Activated T-helper 1 cell treated with anti-CD3 and anti-CD28 coated beads, Interleukin-12 subunit alpha, Interleukin-12 subunit beta, Interleukin-2, Interleukin-4 antibody, amounts not matched to agents 30 ng/mL and 10 ng/mL and 1 ng/mL, durations not matched to agents 14 hours and 24 hours and 36 hours (primary cell): ENCODE measurements at regions of chr9 and their contacts with region 1.

Region 1: DNA sequence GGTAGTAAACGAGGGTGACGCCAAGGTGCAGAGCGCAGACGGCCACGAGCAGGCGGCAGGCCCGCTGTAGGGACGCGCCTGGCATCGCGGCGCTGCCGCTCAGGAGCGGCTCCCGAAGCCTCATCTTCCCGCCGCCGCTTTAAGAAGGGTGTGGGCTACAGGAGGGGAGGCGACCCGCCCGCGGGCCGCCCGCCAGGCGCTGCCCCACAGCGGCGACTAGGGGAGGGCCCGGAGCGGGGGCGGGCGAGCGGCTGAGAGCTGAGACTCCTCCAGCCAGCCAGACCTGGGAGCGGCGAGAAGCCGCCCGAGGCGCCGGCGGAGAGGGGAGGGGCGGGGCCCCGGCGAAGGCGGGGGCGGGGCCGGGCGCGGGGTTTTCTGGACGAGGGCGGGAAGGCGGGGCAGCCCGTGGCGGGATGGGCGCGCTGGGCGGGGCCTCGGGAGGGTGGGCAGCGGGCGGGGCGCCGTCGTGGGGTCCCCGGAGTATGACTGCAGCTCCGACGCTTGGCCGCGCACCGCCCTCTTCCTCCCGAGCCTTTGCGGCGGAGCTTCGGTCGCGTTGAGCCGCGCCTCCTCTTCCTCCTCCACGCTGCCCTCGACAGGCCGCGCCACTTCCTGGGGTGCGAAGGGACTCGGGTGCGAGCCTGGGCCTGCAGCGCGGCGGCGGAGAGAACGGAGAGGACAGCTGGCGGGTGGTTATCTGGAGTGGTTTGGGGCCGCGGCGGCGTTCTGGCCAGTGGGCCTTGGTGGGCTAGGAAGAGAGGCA is at the start of gene B4GALT1:
- DNase-seq: peak; percentile 91
- H3K4me3 Mint-ChIP-seq: peak within 1 kb of the TSS; percentile 96
- H3K27ac Mint-ChIP-seq: peak within 1 kb of the TSS; percentile 98
- H3K4me1 Mint-ChIP-seq: peaks cover 71% of the 10 kb centered on the region
- H3K27me3 Mint-ChIP-seq: no peaks in the 10 kb centered on the region
- total RNA-seq, gene B4GALT1: 64.4 and 66.5 TPM in 2 replicates

Region 2: GRCh38 chr9:32550562-32551433 is 616.4 kb before region 1 on chr9:
- intact Hi-C with region 1: loop called (anchors 2 kb)
- DNase-seq: peak; percentile 91
- H3K4me3 Mint-ChIP-seq: peak overlapping the region; percentile 93
- H3K27ac Mint-ChIP-seq: peak overlapping the region; percentile 99
- H3K4me1 Mint-ChIP-seq: peaks cover 38% of the 10 kb centered on the region
- H3K27me3 Mint-ChIP-seq: no peaks in the 10 kb centered on the region

Region 3: DNA sequence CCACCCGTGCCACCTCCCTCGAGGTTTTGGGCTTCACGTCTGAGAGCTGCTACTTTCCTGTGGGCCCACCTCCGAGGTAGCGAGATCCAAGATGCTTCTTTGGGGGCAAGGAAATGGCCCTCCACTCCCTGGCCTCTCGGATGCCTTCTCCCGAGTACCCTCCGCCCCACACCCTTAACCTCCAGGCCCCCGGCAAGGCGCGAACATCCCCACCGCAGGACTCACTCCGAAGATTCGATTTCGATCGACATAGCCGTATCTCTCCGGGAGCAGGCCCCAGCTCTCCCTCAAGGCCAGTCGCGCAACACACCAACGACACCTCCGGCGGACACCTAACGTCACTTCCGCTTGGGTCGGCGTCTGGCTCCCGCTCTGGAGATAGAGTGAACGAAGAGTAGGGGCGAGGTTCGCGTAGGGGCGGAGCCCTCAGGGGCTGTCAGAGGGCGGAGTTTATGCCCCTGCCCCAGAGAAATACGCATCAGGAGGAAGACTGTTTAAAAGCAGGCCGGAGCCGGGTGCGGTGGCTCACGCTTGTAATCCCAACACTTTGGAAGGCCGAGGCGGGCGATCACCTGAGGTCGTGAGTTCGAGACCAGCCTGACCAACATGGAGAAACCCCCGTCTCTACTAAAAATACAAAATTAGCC is 90.7 kb before region 1 on chr9 and contains the start of gene SMU1:
- intact Hi-C with region 1: loop called (anchors 1 kb)
- DNase-seq: peak; percentile 96
- H3K4me3 Mint-ChIP-seq: peak within 1 kb of the TSS; percentile 99
- H3K27ac Mint-ChIP-seq: peak within 1 kb of the TSS; percentile 96
- H3K4me1 Mint-ChIP-seq: peaks cover 37% of the 10 kb centered on the region
- H3K27me3 Mint-ChIP-seq: peaks cover 2% of the 10 kb centered on the region
- total RNA-seq, gene SMU1: 28.8 TPM in 2 replicates

Region 4: GRCh38 chr9:33151007-33151557 is 16.1 kb before region 1 on chr9:
- intact Hi-C with region 1: loop called (anchors 2 kb)
- DNase-seq: no peak
- H3K4me3 Mint-ChIP-seq: no peak overlapping the region
- H3K27ac Mint-ChIP-seq: no peak overlapping the region
- H3K4me1 Mint-ChIP-seq: peaks cover 72% of the 10 kb centered on the region
- H3K27me3 Mint-ChIP-seq: peaks cover 2% of the 10 kb centered on the region

Region 5: GRCh38 chr9:33187519-33188218 is 20.4 kb after region 1 on chr9:
- intact Hi-C with region 1: no loop called
- DNase-seq: no peak
- H3K4me3 Mint-ChIP-seq: no peak overlapping the region
- H3K27ac Mint-ChIP-seq: no peak overlapping the region
- H3K4me1 Mint-ChIP-seq: peaks cover 14% of the 10 kb centered on the region
- H3K27me3 Mint-ChIP-seq: peaks cover 10% of the 10 kb centered on the region

Region 6: GRCh38 chr9:33264473-33265177 is 97.4 kb after region 1 on chr9 and contains the starts of genes BAG1 and CHMP5:
- intact Hi-C with region 1: loop called (anchors 1 kb)
- DNase-seq: peak; percentile 99
- H3K4me3 Mint-ChIP-seq: peak within 1 kb of the TSS; percentile 96
- H3K27ac Mint-ChIP-seq: peak within 1 kb of the TSS; percentile 94
- H3K4me1 Mint-ChIP-seq: peaks cover 58% of the 10 kb centered on the region
- H3K27me3 Mint-ChIP-seq: no peaks in the 10 kb centered on the region
- total RNA-seq, gene BAG1: 75.0 and 78.2 TPM in 2 replicates
- total RNA-seq, gene CHMP5: 70.7 and 76.7 TPM in 2 replicates

Region 7: GRCh38 chr9:33446946-33447798 is 279.9 kb after region 1 on chr9 and contains the start of gene AQP3:
- intact Hi-C with region 1: loop called (anchors 5 kb)
- DNase-seq: peak; percentile 72
- H3K4me3 Mint-ChIP-seq: peak within 1 kb of the TSS; percentile 93
- H3K27ac Mint-ChIP-seq: peak within 1 kb of the TSS; percentile 90
- H3K4me1 Mint-ChIP-seq: peaks cover 40% of the 10 kb centered on the region
- H3K27me3 Mint-ChIP-seq: no peaks in the 10 kb centered on the region
- total RNA-seq, gene AQP3: 3.4 and 6.1 TPM in 2 replicates